ENCODE measurements at regions of chr4 and their contacts with region 1.

Region 1: DNA sequence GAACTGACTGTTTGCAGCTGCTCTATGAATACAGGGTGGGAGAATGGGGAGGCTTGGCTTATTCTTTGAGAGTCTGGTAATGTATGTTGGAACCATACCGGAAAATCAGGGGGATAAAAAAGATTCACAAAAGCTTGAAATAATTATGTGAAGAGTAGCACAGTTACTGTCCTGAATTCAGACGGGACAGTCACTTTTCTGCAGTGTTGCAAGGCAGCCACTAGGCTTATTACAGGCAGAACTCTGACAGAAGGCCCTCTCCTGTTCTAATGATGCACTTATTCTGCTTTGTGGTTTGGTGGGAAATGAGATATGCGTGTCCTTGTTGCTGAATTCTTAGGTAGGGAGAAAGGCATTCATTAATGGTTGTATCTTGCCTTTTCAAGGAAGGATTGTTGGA is 37.2 kb downstream of the GUCY1B1 start:
- DNase-seq: no peak
- H3K4me3 ChIP-seq: no peak overlapping the region
- H3K27ac ChIP-seq: no peak overlapping the region
- H3K4me1 ChIP-seq: no peaks in the 10 kb centered on the region
- H3K27me3 ChIP-seq: no peaks in the 10 kb centered on the region
- CTCF ChIP-seq: no peak
- POLR2A ChIP-seq: no peak

Region 2: GRCh38 chr4:155442267-155443105 is 353.5 kb before region 1 on chr4:
- intact Hi-C with region 1: loop called (anchors 10 kb)
- DNase-seq: no peak
- H3K4me3 ChIP-seq: no peak overlapping the region
- H3K27ac ChIP-seq: no peak overlapping the region
- H3K4me1 ChIP-seq: no peaks in the 10 kb centered on the region
- H3K27me3 ChIP-seq: no peaks in the 10 kb centered on the region
- CTCF ChIP-seq: peak; percentile 68 to 92 (median 74)
- POLR2A ChIP-seq: no peak

Region 3: DNA sequence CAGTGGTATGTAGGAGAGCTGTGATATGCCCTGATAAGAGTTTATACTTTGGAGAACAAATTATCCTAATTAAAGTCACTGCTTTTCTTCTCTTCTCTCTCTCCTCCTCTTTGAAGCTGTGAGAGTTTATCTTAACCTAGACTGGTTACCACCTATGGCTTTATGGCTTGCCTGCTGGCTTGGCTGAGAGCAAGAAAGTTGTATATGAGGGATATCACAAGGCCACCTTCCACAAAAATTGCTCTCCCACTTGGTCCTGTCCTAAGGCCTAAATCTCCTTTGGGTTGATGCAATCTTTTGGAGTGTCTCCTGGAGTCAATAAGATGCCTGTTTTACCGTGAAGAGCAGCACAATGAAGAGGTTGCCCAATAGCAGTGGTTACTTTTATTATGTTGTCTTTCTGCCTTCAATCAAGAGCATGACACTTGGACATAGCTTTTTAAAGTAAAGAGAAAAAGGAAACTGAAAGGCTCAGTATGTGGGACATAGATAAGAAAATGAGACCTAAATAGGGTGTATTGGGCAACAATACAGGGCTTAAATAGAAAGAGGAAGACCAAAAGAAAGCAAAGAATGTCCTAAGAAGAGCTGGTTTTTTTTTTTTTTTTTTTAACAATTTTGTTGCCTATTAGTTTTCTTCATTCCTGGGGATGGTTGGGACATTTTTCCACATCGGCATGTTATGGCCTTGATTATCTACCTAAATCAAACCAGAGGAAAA is 120.1 kb before region 1 on chr4:
- intact Hi-C with region 1: loop called (anchors 5 kb)
- DNase-seq: no peak
- H3K4me3 ChIP-seq: no peak overlapping the region
- H3K27ac ChIP-seq: peak overlapping the region; percentile 40
- H3K4me1 ChIP-seq: peaks cover 26% of the 10 kb centered on the region
- H3K27me3 ChIP-seq: no peaks in the 10 kb centered on the region
- CTCF ChIP-seq: no peak
- POLR2A ChIP-seq: no peak